H1 (cell line): ENCODE measurements at regions of chr16 and their contacts with region 1.

Region 1: DNA sequence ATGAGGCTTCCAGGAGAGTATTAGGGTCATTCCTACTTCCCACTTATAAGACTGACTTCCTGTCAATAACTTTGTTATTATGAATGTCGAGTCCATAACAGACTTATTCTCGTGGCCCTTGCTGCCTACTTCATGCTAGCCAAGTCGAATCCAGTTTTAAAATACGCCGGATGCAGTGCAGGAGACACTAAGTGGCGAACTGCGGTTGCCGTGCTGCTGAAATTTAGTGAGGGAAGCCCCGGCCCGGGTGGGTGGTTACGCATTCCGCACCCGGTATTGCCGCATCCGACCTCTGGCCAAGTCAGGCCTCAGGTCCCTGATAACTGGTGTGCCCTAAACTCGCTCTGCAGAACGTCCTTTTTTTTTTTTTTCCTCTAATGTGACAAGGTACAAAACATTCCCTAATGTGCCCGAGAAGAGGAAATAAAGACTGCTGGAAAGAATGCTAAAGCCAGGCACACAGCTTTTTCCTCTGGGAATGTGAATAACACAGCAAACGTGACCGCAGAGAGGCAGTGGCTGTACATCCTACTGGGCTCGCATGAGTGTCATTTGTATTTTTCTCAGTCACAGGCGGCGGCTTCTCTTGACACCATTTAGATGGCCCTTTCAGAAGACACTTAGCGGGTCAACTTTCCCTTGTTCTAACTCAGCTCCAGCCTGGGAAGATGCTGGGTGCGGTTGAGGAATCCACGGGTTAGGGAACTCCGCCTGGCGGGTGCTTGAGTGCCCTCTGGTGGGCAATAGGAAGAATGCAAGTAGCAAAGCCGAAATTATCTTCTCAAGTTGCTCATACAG is 7.1 kb upstream of the AKTIP start:
- DNase-seq: peak in 1 of 2 experiments; percentile 63
- H3K4me3 ChIP-seq: no peak overlapping the region
- H3K27ac ChIP-seq: no peak overlapping the region
- H3K4me1 ChIP-seq: peaks cover 0 to 2% (median 0%) of the 10 kb centered on the region in 4 experiments; a peak in 1 of 7 replicates
- H3K27me3 ChIP-seq: no peaks in the 10 kb centered on the region
- CTCF ChIP-seq: peak; percentile 70 to 87 (median 79)
- EP300 ChIP-seq: no peak
- POLR2A ChIP-seq: no peak
- RAD21 ChIP-seq: peak; percentile 73 to 82

Region 2: DNA sequence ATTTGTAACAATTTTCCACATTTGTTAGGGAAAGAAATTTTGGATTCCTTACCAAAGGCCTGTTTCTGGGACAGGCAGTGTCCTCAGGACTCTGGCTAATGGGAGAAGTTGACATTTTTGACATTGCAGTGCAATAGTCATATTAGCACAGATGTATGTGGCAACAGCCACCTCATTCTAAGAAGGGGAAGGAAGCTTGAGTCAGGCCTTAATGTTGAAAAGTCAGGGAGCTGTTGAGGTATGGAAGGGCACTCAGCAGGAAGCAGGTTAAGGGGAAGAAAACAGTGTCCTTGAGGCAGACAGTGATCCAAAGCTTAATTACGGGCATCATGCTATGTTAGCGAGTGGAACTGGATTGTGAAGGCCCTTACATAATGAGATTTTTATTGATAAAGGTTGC is 28.0 kb before region 1 on chr16:
- CTCF ChIA-PET with region 1: no interaction called
- POLR2A ChIA-PET with region 1: no interaction called
- DNase-seq: no peak
- H3K4me3 ChIP-seq: no peak overlapping the region
- H3K27ac ChIP-seq: no peak overlapping the region
- H3K4me1 ChIP-seq: no peaks in the 10 kb centered on the region
- H3K27me3 ChIP-seq: no peaks in the 10 kb centered on the region
- CTCF ChIP-seq: no peak
- EP300 ChIP-seq: no peak
- POLR2A ChIP-seq: no peak
- RAD21 ChIP-seq: no peak

Region 3: DNA sequence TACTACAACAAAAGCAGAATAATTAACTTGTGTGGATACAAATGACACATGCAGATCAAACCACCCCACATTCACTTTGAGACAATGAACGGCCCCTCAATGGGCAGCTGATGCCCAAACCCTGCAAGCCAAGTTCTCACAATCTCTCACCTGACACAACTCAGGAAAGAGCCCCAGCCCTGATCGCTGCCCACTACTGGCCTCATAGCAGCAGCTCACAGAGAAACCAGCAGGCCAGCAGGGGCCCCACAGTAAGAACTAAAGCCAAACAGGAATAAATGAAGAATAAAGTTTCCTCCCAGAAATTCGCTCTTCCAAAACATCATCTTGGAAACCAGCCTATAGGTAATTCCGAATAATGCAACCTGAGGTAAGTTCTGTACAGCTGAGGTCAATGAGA is 14.8 kb before region 1 on chr16:
- CTCF ChIA-PET with region 1: interaction called, 10 read pairs
- POLR2A ChIA-PET with region 1: no interaction called
- DNase-seq: no peak
- H3K4me3 ChIP-seq: no peak overlapping the region
- H3K27ac ChIP-seq: no peak overlapping the region
- H3K4me1 ChIP-seq: no peaks in the 10 kb centered on the region
- H3K27me3 ChIP-seq: no peaks in the 10 kb centered on the region
- CTCF ChIP-seq: peak; percentile 42 to 56 (median 53)
- EP300 ChIP-seq: no peak
- POLR2A ChIP-seq: no peak
- RAD21 ChIP-seq: peak; percentile 5 to 30; a peak in 2 of 4 replicates